ENCODE measurements at regions of chr7 and their contacts with region 1.

Region 1: GRCh38 chr7:135509903-135510602 is at the start of gene CNOT4:
- DNase-seq: peak; percentile 92 to 98 (median 96)
- H3K4me3 ChIP-seq: peak within 1 kb of the TSS; percentile 65 to 96 (median 85)
- H3K27ac ChIP-seq: peak within 1 kb of the TSS in 58 of 59 donors; percentile 71 to 98 (median 92)
- H3K27me3 ChIP-seq: no peaks in the 10 kb centered on the region
- CTCF ChIP-seq: peak in 41 of 56 donors; percentile 11 to 69 (median 36)
- total RNA-seq, gene CNOT4: 34.5 to 64.2 (median 48.1) TPM

Region 2: DNA sequence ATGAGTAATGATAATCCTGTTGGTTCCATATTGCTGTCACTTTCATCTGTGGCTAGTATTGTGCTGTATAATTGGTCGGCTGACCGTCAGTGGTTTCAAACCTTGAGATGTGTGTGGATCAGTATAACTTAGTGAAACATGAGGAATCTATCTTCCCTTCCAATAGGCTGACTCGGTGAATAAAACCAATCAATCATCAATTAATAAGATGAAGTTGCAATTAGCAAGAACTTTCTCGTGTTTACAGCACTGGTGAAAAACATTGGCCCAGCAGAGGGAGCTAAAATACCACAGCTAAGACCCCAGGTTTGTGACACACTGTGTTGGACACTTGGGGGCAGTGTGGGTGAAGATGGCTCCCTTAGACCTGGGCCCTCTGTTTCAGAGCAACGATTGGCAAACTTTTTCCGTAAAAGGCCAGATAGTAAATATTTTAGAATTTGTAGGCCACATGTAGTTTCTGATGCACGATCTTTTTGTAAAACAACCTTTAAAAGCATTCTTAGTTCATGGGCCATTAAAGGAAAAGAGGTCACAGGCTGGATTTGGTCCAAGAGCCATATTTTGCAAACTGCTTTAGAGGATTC is 228.6 kb before region 1 on chr7:
- intact Hi-C with region 1: loop called (anchors 2 to 5 kb)
- DNase-seq: peak; percentile 43 to 93 (median 80)
- H3K4me3 ChIP-seq: peak overlapping the region in 32 of 59 donors; percentile 4 to 45 (median 29)
- H3K27ac ChIP-seq: peak overlapping the region in 5 of 59 donors; percentile 11 to 70 (median 16)
- H3K27me3 ChIP-seq: no peaks in the 10 kb centered on the region
- CTCF ChIP-seq: peak; percentile 95 to 100 (median 99)

Region 3: DNA sequence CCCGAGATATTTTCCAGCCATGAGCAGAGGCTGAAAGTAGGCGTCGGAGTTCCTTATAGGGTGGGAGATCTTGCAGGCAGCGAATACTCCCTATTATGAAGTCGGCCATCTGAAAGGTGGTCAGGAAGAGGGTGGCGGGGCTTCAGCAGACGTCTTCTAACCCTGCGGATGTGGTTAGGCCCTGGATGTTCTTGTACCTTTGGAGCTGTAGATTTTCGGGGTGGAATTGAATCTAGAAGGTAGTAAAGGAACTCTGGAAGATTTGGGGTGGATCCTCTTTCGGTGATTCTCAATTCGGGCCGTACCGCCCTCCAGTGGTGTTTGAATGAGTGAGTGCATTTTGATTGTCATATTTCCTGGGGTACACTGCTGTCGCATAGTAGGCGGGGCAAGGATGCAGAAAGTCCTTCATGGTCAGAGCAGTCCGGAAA is 48.3 kb after region 1 on chr7:
- intact Hi-C with region 1: loop called (anchors 1 kb)
- DNase-seq: peak in 8 of 10 donors; percentile 49 to 71 (median 59)
- H3K4me3 ChIP-seq: peak overlapping the region; percentile 55 to 98 (median 89)
- H3K27ac ChIP-seq: peak overlapping the region; percentile 13 to 100 (median 98)
- H3K27me3 ChIP-seq: no peaks in the 10 kb centered on the region
- CTCF ChIP-seq: peak in 55 of 56 donors; percentile 20 to 72 (median 55)

Region 4: DNA sequence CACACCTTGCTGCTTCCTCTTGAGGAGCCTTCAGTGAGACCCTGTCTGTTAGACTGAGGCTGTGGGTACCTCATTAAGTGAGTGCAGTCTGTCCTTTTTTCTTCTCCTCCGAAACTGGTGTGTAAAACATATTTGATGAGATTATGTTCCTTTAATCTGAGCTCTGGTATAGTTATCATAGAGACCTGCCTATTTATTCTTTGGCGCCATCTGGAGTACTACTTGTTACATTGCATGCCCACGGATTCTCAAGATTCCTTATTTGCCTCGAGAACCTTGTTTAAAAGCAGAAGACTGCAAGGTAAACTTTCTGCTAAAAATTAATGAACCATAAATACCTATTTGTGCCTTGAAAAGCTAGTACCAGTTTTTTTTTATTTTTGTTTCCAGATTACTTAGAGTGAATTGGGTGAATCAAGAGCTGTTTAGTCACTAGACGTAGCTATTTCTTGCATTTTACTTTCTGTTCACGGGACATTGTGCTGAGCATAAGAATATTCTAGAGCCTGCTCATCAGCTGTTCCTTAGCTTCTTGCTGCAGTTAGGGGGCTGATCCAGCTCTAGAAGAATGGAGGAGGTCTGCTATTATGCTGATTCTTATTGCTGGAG is 135.3 kb after region 1 on chr7:
- intact Hi-C with region 1: loop called (anchors 5 kb)
- DNase-seq: peak in 1 of 10 donors; percentile 41
- H3K4me3 ChIP-seq: peak overlapping the region in 8 of 59 donors; percentile 7 to 41 (median 21)
- H3K27ac ChIP-seq: peak overlapping the region in 16 of 59 donors; percentile 0 to 55 (median 29)
- H3K27me3 ChIP-seq: no peaks in the 10 kb centered on the region
- CTCF ChIP-seq: peak; percentile 62 to 89 (median 75)

Region 5: GRCh38 chr7:135662373-135663114 is 152.5 kb after region 1 on chr7 and contains the start of gene STMP1:
- intact Hi-C with region 1: loop called in 1 of 2 experiments (anchors 5 kb)
- DNase-seq: peak; percentile 88 to 96 (median 94)
- H3K4me3 ChIP-seq: peak within 1 kb of the TSS; percentile 64 to 100 (median 94)
- H3K27ac ChIP-seq: peak within 1 kb of the TSS; percentile 57 to 97 (median 90)
- H3K27me3 ChIP-seq: no peaks in the 10 kb centered on the region
- CTCF ChIP-seq: peak in 52 of 56 donors; percentile 20 to 98 (median 92)
- total RNA-seq, gene STMP1: 14.7 to 33.0 (median 23.4) TPM

Measured in dorsolateral prefrontal cortex (tissue), 120 donors.